Activated CD4-positive, alpha-beta T cell treated with anti-CD3 and anti-CD28 coated beads for 36 hours (primary cell): ENCODE measurements at regions of chr2 and their contacts with region 1.

Region 1: GRCh38 chr2:201071479-201072200 is at the starts of genes HYCC2 and NDUFB3:
- DNase-seq: peak; percentile 95
- ATAC-seq: peak; percentile 94
- H3K4me3 Mint-ChIP-seq: peak within 1 kb of the TSS; percentile 97
- H3K27ac Mint-ChIP-seq: peak within 1 kb of the TSS; percentile 96
- H3K4me1 Mint-ChIP-seq: peaks cover 58% of the 10 kb centered on the region
- H3K27me3 Mint-ChIP-seq: no peaks in the 10 kb centered on the region
- total RNA-seq, gene HYCC2: 15.8 to 16.0 TPM
- total RNA-seq, gene NDUFB3: 126 to 150 TPM

Region 2: DNA sequence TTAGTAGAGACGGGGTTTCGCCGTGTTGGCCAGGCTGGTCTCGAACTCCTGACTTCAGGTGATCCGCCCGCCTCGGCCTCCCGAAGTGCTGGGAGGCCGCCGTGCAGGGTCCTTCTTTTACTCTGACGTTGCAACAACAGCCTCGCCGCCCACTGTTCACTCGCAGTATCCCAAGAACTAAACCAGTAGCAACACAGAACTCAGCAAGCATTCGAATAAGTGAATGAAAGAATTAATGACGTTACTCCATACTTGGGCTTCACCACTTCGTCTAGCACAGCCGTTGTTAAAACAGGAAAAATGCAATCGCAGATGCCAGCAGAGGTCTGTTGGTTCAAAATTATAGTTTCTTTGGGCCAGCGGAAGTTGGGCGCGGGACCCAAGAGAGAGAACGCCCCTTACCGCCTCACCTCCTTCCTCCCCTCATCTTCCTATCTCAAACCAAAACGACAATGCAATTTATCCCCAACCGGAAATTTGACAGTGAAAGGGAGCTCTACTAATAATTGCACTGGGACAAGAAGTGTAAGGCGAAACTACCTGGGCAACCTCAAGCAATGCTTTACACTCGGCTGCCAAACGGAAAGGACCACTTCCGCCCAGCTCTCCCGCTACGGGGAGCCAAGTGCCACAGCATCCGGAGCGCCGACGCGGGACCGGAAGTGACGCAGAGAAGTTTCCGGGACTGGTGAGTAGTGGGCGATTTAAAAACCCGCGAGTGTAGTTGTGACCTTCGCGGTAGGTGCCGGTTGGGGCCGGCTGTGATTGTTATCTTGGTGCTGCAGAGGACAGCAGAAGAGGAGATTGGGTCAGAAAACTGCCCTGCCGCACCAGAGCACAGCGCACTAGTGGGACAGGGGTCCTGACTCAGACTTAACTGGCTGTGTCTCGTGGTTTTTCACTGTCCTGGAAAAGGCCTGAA is 182.7 kb before region 1 on chr2 and contains the starts of genes NIF3L1 and PPIL3:
- CTCF ChIA-PET with region 1: interaction called, 14 read pairs
- POLR2A ChIA-PET with region 1: interaction called, 3 read pairs
- intact Hi-C with region 1: loop called (anchors 1 kb)
- DNase-seq: peak; percentile 99
- ATAC-seq: peak; percentile 83
- H3K4me3 Mint-ChIP-seq: peak within 1 kb of the TSS; percentile 98
- H3K27ac Mint-ChIP-seq: peak within 1 kb of the TSS; percentile 100
- H3K4me1 Mint-ChIP-seq: peaks cover 46% of the 10 kb centered on the region
- H3K27me3 Mint-ChIP-seq: no peaks in the 10 kb centered on the region
- total RNA-seq, gene NIF3L1: 37.0 to 47.7 TPM
- total RNA-seq, gene PPIL3: 52.6 to 53.0 TPM

Region 3: GRCh38 chr2:201040867-201041628 is 30.6 kb before region 1 on chr2:
- CTCF ChIA-PET with region 1: interaction called, 16 read pairs
- POLR2A ChIA-PET with region 1: interaction called, 3 read pairs
- intact Hi-C with region 1: no loop called
- DNase-seq: no peak
- ATAC-seq: no peak
- H3K4me3 Mint-ChIP-seq: no peak overlapping the region
- H3K27ac Mint-ChIP-seq: no peak overlapping the region
- H3K4me1 Mint-ChIP-seq: peaks cover 4% of the 10 kb centered on the region
- H3K27me3 Mint-ChIP-seq: no peaks in the 10 kb centered on the region

Region 4: GRCh38 chr2:201130524-201131186 is 59.0 kb after region 1 on chr2:
- CTCF ChIA-PET with region 1: interaction called, 4 read pairs
- POLR2A ChIA-PET with region 1: interaction called, 5 read pairs
- intact Hi-C with region 1: loop called (anchors 1 to 2 kb)
- DNase-seq: peak; percentile 62
- ATAC-seq: peak; percentile 48
- H3K4me3 Mint-ChIP-seq: peak overlapping the region; percentile 81
- H3K27ac Mint-ChIP-seq: peak overlapping the region; percentile 95
- H3K4me1 Mint-ChIP-seq: peaks cover 65% of the 10 kb centered on the region
- H3K27me3 Mint-ChIP-seq: no peaks in the 10 kb centered on the region

Region 5: DNA sequence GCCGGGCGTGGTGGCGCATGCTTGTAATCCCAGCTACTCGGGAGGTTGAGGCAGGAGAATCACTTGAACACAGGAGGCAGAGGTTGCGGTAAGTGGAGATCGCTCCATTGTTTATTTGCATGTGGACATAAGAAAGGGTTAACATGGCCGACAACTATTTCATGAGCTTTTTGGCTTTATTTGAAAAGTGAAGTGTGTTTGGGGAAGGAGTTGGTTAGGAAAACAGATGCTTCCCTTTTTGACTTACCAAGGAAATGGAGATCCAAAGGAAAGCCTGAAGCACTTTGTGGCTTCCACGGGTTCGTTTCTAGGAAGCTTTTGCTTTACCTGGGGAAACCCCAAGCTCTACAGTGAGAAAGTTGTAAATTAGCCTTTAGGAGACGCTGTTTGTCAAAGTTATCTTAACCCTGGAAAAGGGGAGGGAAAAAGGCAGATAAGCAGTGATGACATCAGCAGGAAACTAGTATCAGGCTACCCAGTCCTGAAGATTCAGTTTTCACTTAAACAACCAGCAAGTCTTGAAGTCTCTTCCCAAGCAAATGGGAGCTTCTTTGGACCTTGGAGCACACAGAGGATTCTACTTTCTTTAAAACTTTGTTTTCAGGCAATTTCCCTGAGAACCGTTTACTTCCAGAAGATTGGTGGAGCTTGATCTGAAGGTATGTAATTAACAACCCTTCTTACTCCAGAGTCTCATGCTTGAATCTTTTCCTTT is 111.2 kb after region 1 on chr2 and contains the start of gene CASP10:
- CTCF ChIA-PET with region 1: interaction called, 21 read pairs
- POLR2A ChIA-PET with region 1: no interaction called
- intact Hi-C with region 1: loop called in 1 of 2 experiments (anchors 2 kb)
- DNase-seq: no peak
- ATAC-seq: peak; percentile 66
- H3K4me3 Mint-ChIP-seq: peak within 1 kb of the TSS; percentile 86
- H3K27ac Mint-ChIP-seq: peak within 1 kb of the TSS; percentile 96
- H3K4me1 Mint-ChIP-seq: peaks cover 43% of the 10 kb centered on the region
- H3K27me3 Mint-ChIP-seq: no peaks in the 10 kb centered on the region
- total RNA-seq, gene CASP10: 12.2 to 16.8 TPM

Region 6: GRCh38 chr2:201668402-201668910 is 596.8 kb after region 1 on chr2:
- CTCF ChIA-PET with region 1: no interaction called
- POLR2A ChIA-PET with region 1: no interaction called
- intact Hi-C with region 1: no loop called
- DNase-seq: no peak
- ATAC-seq: no peak
- H3K4me3 Mint-ChIP-seq: no peak overlapping the region
- H3K27ac Mint-ChIP-seq: no peak overlapping the region
- H3K4me1 Mint-ChIP-seq: no peaks in the 10 kb centered on the region
- H3K27me3 Mint-ChIP-seq: no peaks in the 10 kb centered on the region